IMR-90 (cell line): ENCODE measurements at regions of chr5 and their contacts with region 1.

Region 1: DNA sequence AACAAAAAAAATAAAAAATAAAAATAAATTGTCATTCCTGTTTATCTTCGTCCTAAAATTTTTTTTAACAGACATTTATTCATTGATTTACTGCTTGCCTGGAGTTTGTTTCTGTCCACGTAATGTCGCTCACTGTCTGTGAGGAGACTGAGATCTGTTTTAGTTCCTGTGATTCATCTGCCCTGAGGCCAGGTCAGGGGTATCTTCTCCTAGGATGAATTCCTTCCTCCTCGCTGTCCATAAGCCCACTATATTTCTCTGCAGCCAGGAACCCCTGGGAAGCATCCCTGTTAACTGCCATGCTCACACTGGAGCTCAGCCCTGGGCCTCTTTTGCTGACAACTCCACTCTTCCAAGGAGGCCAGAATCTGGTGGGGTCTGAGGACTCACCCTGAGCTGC is 682.0 kb downstream of the MTRR start:
- DNase-seq: no peak
- ATAC-seq: no peak
- H3K4me3 ChIP-seq: no peak overlapping the region
- H3K27ac ChIP-seq: no peak overlapping the region
- H3K4me1 ChIP-seq: no peaks in the 10 kb centered on the region
- H3K27me3 ChIP-seq: no peaks in the 10 kb centered on the region
- CTCF ChIP-seq: no peak
- POLR2A ChIP-seq: no peak
- RAD21 ChIP-seq: no peak

Region 2: DNA sequence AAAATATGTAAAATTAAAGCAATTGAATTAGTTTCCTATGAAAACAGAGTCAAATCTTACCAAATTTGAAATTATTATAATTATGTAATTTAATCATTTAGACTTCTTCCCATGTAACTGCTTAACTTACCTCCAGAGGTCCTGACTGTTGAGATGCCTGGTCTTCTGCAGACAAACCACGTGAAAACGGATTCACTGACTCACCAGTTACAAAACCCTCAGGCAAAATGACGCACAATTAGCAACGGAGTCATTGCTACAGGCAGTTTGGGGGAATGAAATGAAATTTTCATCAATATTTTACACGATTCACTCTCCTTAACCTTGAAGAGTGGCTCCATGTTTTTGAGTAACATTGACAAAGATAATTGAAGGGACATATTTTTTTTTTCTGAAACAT is 221.1 kb before region 1 on chr5:
- CTCF ChIA-PET with region 1: no interaction called
- POLR2A ChIA-PET with region 1: no interaction called
- dilution Hi-C with region 1: no loop called
- in situ Hi-C with region 1: no loop called
- intact Hi-C with region 1: loop called (anchors 1 kb)
- DNase-seq: peak; percentile 48
- ATAC-seq: no peak
- H3K4me3 ChIP-seq: no peak overlapping the region
- H3K27ac ChIP-seq: no peak overlapping the region
- H3K4me1 ChIP-seq: no peaks in the 10 kb centered on the region
- H3K27me3 ChIP-seq: peaks cover 4% of the 10 kb centered on the region
- CTCF ChIP-seq: no peak
- POLR2A ChIP-seq: no peak
- RAD21 ChIP-seq: no peak